ENCODE measurements at regions of chr6 and their contacts with region 1.

Region 1: DNA sequence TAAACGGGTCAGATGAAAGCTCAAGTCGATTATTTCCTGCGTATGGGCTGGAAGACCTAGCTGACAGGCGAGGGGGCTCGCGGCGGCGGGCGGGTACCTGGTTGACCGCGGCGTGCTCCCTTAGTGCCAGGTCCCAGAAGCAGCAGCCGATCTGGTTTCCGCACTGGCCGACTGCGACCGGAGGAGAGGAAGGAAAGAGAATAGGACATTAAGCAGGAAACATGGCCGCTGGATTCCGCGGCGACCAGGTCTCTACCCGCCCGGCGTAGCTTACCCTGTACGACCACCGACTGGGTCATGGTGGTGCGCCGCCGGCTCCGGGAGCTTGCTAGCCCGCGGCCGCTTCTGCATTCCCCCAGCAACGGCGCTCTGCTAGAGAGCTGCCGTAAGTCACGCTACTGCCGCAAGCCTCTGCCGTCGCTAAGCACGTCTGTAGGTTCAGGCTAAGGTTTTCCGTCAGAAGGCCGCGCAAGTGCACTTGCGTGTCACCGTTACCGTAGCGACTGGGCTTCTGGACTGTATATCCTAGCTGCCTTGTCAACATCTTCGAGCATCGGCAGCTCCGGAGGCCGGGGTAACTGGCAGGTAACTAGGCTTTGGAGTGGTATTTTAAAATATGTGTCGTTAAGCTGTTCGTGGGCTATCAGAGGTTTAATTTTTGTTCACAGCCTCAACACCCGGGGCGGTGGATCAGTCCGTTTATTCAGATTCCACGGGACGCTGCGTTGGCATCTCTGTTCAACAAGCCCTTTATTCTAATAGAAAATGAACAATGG is at the starts of genes FAM229B and TUBE1:
- DNase-seq: peak; percentile 96
- H3K4me3 Mint-ChIP-seq: no peak within 1 kb of the TSS
- H3K27ac Mint-ChIP-seq: no peak within 1 kb of the TSS
- H3K4me1 Mint-ChIP-seq: peaks cover 7% of the 10 kb centered on the region
- H3K27me3 Mint-ChIP-seq: peaks cover 35% of the 10 kb centered on the region
- total RNA-seq, gene FAM229B: 0.91 and 0.97 TPM in 2 replicates
- total RNA-seq, gene TUBE1: 24.3 and 30.1 TPM in 2 replicates

Region 2: GRCh38 chr6:112128208-112128607 is 40.9 kb after region 1 on chr6:
- intact Hi-C with region 1: loop called (anchors 5 kb)
- DNase-seq: no peak
- H3K4me3 Mint-ChIP-seq: no peak overlapping the region
- H3K27ac Mint-ChIP-seq: no peak overlapping the region
- H3K4me1 Mint-ChIP-seq: no peaks in the 10 kb centered on the region
- H3K27me3 Mint-ChIP-seq: peaks cover 39% of the 10 kb centered on the region

Region 3: GRCh38 chr6:112153926-112154607 is 66.7 kb after region 1 on chr6:
- intact Hi-C with region 1: loop called (anchors 2 kb)
- DNase-seq: no peak
- H3K4me3 Mint-ChIP-seq: peak overlapping the region; percentile 43
- H3K27ac Mint-ChIP-seq: no peak overlapping the region
- H3K4me1 Mint-ChIP-seq: peaks cover 20% of the 10 kb centered on the region
- H3K27me3 Mint-ChIP-seq: peaks cover 21% of the 10 kb centered on the region

Region 4: GRCh38 chr6:112163295-112164257 is 76.3 kb after region 1 on chr6:
- intact Hi-C with region 1: loop called (anchors 1 kb)
- DNase-seq: peak; percentile 93
- H3K4me3 Mint-ChIP-seq: peak overlapping the region; percentile 45
- H3K27ac Mint-ChIP-seq: no peak overlapping the region
- H3K4me1 Mint-ChIP-seq: peaks cover 16% of the 10 kb centered on the region
- H3K27me3 Mint-ChIP-seq: peaks cover 58% of the 10 kb centered on the region